ENCODE measurements at regions of chr7 and their contacts with region 1.

Region 1: DNA sequence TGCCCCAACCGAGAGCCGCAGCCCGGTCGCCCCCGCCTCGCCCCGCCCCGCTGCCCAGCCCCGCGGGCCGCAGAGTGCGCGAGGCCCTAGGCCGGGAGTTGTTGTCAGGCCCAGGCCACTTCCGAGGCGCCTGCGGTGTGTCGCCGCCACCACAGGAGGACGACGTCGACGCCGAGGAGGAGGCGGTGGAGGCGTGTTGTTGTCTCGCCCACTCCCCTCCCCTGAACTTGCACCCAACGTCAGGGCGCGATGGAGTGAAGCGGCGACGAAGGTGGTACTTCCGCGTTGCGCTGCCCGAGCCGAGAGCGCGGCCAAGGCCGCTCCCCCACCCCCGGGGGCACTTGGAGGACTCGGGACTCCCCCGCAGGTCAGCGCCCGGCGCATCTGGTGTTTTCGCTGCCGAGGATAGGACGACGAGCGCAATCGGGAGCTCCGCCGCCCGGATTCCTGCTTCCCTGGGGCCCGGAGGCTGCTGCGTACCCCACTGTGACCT is at the start of gene CDK13:
- DNase-seq: peak in 9 of 10 donors; percentile 46 to 94 (median 63)

Region 2: GRCh38 chr7:40057292-40057691 is 107.3 kb after region 1 on chr7:
- intact Hi-C with region 1: loop called (anchors 2 kb)
- DNase-seq: no peak

Region 3: GRCh38 chr7:40134428-40135316 is 184.6 kb after region 1 on chr7 and contains the starts of genes MPLKIP and SUGCT:
- intact Hi-C with region 1: loop called (anchors 2 kb)
- DNase-seq: peak; percentile 77 to 97 (median 82)